ENCODE measurements at regions of chr17 and their contacts with region 1.

Region 1: GRCh38 chr17:79707931-79708891 is 22.5 kb upstream of the ENPP7 start:
- DNase-seq: peak; percentile 79
- ATAC-seq: peak; percentile 65
- H3K4me3 Mint-ChIP-seq: peak overlapping the region; percentile 55
- H3K27ac Mint-ChIP-seq: no peak overlapping the region
- H3K4me1 Mint-ChIP-seq: peaks cover 15% of the 10 kb centered on the region
- H3K27me3 Mint-ChIP-seq: no peaks in the 10 kb centered on the region
- CTCF ChIP-seq: peak; percentile 73

Region 2: GRCh38 chr17:79109570-79109969 is 598.6 kb before region 1 on chr17:
- CTCF ChIA-PET with region 1: no interaction called
- POLR2A ChIA-PET with region 1: no interaction called
- DNase-seq: peak; percentile 60
- ATAC-seq: peak; percentile 78
- H3K4me3 Mint-ChIP-seq: no peak overlapping the region
- H3K27ac Mint-ChIP-seq: no peak overlapping the region
- H3K4me1 Mint-ChIP-seq: no peaks in the 10 kb centered on the region
- H3K27me3 Mint-ChIP-seq: no peaks in the 10 kb centered on the region
- CTCF ChIP-seq: 0 out of 2 replicates have a peak, but pooled peaks have one; percentile 23

Region 3: DNA sequence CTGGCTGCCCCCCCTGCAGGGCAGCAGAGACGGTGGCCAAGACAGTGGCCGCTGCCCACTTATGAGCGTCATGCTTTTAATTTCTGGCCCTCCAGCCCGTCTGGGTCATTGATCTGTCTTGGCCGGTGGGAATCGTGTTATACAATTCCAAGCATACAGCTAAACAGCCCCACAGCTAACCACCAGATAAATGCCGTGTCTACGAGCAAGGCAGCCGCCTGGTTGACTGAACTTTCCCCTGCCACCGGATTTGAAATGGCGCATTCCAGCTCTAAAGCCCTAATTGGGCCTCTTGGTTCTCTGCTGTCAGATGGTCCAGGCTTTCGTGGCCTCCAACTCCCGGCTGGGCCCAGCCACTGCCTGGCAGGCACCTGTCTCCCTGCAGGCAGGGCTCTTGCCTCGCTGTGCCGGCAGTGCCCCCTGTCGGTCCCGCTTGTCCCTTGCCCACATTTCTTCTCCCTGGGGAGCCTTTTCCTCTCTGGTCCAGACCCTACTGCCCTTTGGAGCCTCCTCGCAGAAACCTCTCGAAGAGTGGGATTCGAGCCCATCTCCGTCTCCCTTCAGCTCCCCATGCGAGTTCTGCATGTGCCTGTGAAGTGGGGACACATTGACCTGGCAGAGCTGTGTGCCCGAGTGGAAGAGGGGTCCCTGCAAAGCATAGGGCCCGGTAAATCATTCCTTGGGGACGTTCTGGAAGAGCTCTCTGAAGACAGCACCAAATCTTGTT is 95.6 kb before region 1 on chr17:
- CTCF ChIA-PET with region 1: interaction called, 24 read pairs
- POLR2A ChIA-PET with region 1: no interaction called
- DNase-seq: peak; percentile 93
- ATAC-seq: peak; percentile 40
- H3K4me3 Mint-ChIP-seq: no peak overlapping the region
- H3K27ac Mint-ChIP-seq: no peak overlapping the region
- H3K4me1 Mint-ChIP-seq: peaks cover 12% of the 10 kb centered on the region
- H3K27me3 Mint-ChIP-seq: peaks cover 61% of the 10 kb centered on the region
- CTCF ChIP-seq: peak; percentile 80

Region 4: DNA sequence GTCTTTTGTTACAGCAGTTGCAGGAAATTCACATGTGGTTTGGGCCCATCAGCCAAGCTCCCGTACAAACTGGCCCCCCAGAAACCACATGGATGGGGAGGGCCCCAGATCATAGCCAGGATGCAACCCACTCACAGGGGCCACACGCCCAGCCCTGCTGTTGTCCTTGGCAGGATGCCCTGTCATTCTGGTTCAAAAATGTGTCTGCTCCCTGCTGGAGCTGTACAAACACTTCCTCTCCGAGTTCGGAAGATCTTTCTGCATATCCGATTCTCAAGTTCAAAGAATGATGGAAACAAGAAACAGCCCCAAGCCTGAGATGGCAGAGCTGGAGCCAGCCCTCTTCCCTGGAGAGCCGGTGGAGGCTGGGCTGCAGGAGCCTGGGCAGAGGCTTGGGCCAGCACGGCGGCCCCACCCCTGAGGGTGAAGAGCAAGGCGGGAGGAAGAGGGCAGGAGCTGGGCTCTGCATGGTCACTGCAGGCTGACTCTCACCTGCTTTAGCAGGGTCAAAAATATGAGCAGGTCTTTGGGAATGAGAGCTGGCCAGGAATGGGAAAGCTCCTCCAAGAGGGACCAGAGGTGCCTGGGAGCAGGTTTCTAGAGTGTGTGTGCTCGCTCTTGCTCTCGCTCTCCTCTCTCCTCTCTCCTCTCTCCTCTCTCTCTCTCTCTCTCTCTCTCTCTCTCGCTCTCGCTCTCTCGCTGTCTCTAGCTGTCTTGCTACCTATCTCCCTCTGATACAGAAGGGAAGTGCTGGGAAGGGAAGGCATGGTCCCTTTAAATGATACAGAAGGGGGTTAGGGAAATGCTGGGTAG is 12.2 kb before region 1 on chr17:
- CTCF ChIA-PET with region 1: interaction called, 16 read pairs
- POLR2A ChIA-PET with region 1: no interaction called
- DNase-seq: no peak
- ATAC-seq: no peak
- H3K4me3 Mint-ChIP-seq: no peak overlapping the region
- H3K27ac Mint-ChIP-seq: no peak overlapping the region
- H3K4me1 Mint-ChIP-seq: peaks cover 55% of the 10 kb centered on the region
- H3K27me3 Mint-ChIP-seq: no peaks in the 10 kb centered on the region
- CTCF ChIP-seq: no peak

Region 5: DNA sequence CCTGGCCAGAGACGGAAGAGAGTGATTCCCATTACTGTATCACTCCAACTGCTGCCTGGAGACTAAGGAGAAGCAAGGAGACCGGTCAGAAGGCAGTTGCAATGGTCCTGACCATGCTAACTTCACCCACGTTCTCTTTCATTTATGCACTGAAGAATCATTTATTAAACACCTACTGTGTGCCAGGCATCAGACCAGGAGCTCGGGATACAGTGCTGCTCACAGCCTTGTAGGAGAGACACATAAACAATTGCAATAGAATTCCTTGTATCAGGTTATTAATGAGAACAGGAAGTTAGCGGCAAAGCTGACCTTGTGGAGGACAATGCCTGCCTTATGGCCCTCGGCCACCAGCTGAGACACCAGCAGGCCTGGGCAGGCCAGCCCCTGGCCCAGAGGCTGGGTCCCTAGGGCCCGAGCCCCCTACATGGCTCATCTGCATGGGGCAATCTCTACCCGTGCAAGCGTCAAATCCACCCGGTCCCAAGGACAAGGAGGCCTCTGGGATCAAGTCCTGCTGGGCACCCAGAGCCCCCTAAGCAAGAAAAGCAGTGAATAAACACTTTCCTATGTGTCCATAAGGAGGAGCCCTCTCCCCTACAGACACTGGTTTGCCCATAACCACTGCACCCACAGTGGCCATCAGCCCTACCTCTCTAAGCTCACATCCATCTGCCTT is 13.9 kb after region 1 on chr17:
- CTCF ChIA-PET with region 1: interaction called, 19 read pairs
- POLR2A ChIA-PET with region 1: no interaction called
- DNase-seq: peak; percentile 31
- ATAC-seq: peak; percentile 96
- H3K4me3 Mint-ChIP-seq: no peak overlapping the region
- H3K27ac Mint-ChIP-seq: no peak overlapping the region
- H3K4me1 Mint-ChIP-seq: peaks cover 8% of the 10 kb centered on the region; the same call in 1 of the 2 replicates
- H3K27me3 Mint-ChIP-seq: peaks cover 4% of the 10 kb centered on the region; the same call in 1 of the 2 replicates
- CTCF ChIP-seq: peak; percentile 27; the same call in 1 of the 2 replicates

Measured in WTC11 (cell line).